Uterus (tissue), 4 donors: ENCODE measurements at regions of chr10 and their contacts with region 1.

Region 1: GRCh38 chr10:84987039-84987438 is 658.6 kb downstream of the CCSER2 start:
- DNase-seq: no peak
- H3K4me3 ChIP-seq: no peak overlapping the region
- H3K27ac ChIP-seq: no peak overlapping the region
- H3K4me1 ChIP-seq: no peaks in the 10 kb centered on the region
- H3K27me3 ChIP-seq: no peaks in the 10 kb centered on the region
- CTCF ChIP-seq: no peak
- POLR2A ChIP-seq: no peak

Region 2: GRCh38 chr10:84938117-84938905 is 48.7 kb before region 1 on chr10:
- intact Hi-C with region 1: no loop called
- DNase-seq: no peak
- H3K4me3 ChIP-seq: no peak overlapping the region
- H3K27ac ChIP-seq: no peak overlapping the region
- H3K4me1 ChIP-seq: no peaks in the 10 kb centered on the region
- H3K27me3 ChIP-seq: no peaks in the 10 kb centered on the region
- CTCF ChIP-seq: no peak
- POLR2A ChIP-seq: no peak

Region 3: GRCh38 chr10:85293483-85293882 is 306.4 kb after region 1 on chr10:
- intact Hi-C with region 1: loop called (anchors 5 kb)
- DNase-seq: no peak
- H3K4me3 ChIP-seq: no peak overlapping the region
- H3K27ac ChIP-seq: no peak overlapping the region
- H3K4me1 ChIP-seq: no peaks in the 10 kb centered on the region
- H3K27me3 ChIP-seq: no peaks in the 10 kb centered on the region
- CTCF ChIP-seq: no peak
- POLR2A ChIP-seq: no peak

Region 4: GRCh38 chr10:85826377-85826776 is 839.3 kb after region 1 on chr10:
- intact Hi-C with region 1: no loop called
- DNase-seq: no peak
- H3K4me3 ChIP-seq: no peak overlapping the region
- H3K27ac ChIP-seq: no peak overlapping the region
- H3K4me1 ChIP-seq: no peaks in the 10 kb centered on the region
- H3K27me3 ChIP-seq: no peaks in the 10 kb centered on the region
- CTCF ChIP-seq: no peak
- POLR2A ChIP-seq: no peak